Transverse colon (tissue), 4 donors: ENCODE measurements at regions of chr15 and their contacts with region 1.

Region 1: GRCh38 chr15:92803847-92804609 is 96.1 kb upstream of the CHD2 start:
- DNase-seq: peak; percentile 79
- H3K4me3 ChIP-seq: no peak overlapping the region
- H3K27ac ChIP-seq: peak overlapping the region; percentile 85 to 98 (median 87)
- H3K4me1 ChIP-seq: peaks cover 16 to 62% (median 30%) of the 10 kb centered on the region in 4 donors
- H3K27me3 ChIP-seq: no peaks in the 10 kb centered on the region
- CTCF ChIP-seq: no peak
- EP300 ChIP-seq: peak; percentile 90
- POLR2A ChIP-seq: peak; percentile 22

Region 2: GRCh38 chr15:92930776-92931175 is 126.7 kb after region 1 on chr15:
- in situ Hi-C with region 1: loop called in 3 of 4 experiments (anchors 5 to 25 kb)
- intact Hi-C with region 1: no loop called
- DNase-seq: no peak
- H3K4me3 ChIP-seq: no peak overlapping the region
- H3K27ac ChIP-seq: peak overlapping the region in 3 of 4 donors; percentile 10 to 17 (median 16)
- H3K4me1 ChIP-seq: peaks cover 9 to 54% (median 38%) of the 10 kb centered on the region in 4 donors
- H3K27me3 ChIP-seq: no peaks in the 10 kb centered on the region
- CTCF ChIP-seq: no peak
- EP300 ChIP-seq: no peak
- POLR2A ChIP-seq: no peak